Activated naive CD4-positive, alpha-beta T cell treated with anti-CD3 and anti-CD28 coated beads, Interleukin-2, amount 10 ng/mL, durations not matched to agents 7 days and 5 days (primary cell): ENCODE measurements at regions of chr4 and their contacts with region 1.

Region 1: DNA sequence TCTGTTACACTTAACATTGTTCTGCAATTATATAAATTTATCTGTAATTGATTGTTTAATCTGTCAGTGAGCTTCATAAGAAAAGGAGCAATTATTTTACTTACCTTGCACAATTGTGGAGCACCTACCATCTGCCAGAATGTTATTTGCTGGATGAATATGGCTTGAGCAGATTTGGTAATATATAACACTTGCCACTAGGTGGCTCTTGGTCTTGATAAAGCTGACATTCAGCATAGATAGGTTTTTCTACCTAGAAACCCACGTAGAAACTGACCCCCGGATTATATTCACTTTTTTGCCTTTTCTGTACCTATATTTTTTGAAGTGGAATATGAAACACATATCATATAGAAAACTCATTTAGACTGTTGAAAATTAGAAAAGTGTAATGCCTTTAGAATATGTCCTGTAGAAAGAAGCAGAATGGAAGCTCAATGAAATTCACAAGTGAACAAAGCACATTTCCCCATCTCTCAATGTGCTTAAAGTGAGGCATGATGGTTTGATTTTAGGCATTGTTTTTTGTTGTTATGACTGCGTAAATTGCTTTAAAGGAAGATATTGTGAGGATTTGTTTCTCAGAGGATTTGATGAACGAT is 9.5 kb downstream of the RBPJ start:
- DNase-seq: no peak
- H3K4me3 Mint-ChIP-seq: no peak overlapping the region
- H3K27ac Mint-ChIP-seq: no peak overlapping the region
- H3K4me1 Mint-ChIP-seq: peaks cover 19% of the 10 kb centered on the region
- H3K27me3 Mint-ChIP-seq: no peaks in the 10 kb centered on the region

Region 2: DNA sequence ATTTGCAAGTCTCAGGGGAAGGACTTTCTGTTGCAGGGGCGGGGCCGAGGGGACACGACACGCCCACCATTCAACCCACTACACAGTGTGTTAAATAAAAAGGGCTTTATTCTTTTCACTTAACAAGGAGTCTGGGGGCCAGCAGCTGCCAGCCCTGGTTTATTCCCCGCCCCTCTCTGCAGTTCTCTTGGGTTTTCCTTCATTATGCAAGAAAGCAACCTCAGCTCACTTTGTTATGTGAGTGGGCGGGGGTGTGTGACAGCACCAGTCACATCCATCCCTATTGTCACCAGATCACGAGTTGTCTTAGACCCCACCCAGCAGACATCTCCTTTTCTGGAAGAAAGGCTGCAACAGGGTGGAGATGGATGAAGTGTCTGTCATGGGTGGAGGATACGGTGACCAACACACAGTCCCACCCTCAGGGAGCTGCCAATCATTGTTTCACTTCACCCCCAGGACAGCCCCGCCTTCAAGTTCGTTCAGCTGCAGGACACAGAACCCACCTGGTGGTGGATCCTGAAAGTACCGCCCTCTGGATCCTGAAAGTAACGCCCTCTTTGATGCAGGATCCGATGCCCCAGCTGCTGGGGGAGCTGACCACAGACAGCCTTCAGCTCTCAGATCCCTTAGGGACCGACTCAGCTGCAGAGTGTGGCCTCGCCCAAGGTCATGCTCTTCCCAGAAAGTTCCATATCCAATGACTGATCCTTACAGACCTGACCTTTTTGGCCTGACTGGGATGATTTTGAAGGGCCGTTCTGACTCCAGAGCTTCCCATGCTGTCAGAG is 336.7 kb before region 1 on chr4:
- CTCF ChIA-PET with region 1: interaction called, 18 read pairs
- DNase-seq: peak; percentile 25
- H3K4me3 Mint-ChIP-seq: no peak overlapping the region
- H3K27ac Mint-ChIP-seq: no peak overlapping the region
- H3K4me1 Mint-ChIP-seq: peaks cover 2% of the 10 kb centered on the region
- H3K27me3 Mint-ChIP-seq: peaks cover 17% of the 10 kb centered on the region

Region 3: GRCh38 chr4:26061248-26061986 is 268.9 kb before region 1 on chr4:
- CTCF ChIA-PET with region 1: interaction called, 97 read pairs
- DNase-seq: peak; percentile 53
- H3K4me3 Mint-ChIP-seq: no peak overlapping the region
- H3K27ac Mint-ChIP-seq: no peak overlapping the region
- H3K4me1 Mint-ChIP-seq: peaks cover 4% of the 10 kb centered on the region
- H3K27me3 Mint-ChIP-seq: peaks cover 22% of the 10 kb centered on the region

Region 4: GRCh38 chr4:26342328-26343037 is 12.2 kb after region 1 on chr4:
- CTCF ChIA-PET with region 1: interaction called, 14 read pairs
- DNase-seq: no peak
- H3K4me3 Mint-ChIP-seq: no peak overlapping the region
- H3K27ac Mint-ChIP-seq: no peak overlapping the region
- H3K4me1 Mint-ChIP-seq: peaks cover 17% of the 10 kb centered on the region
- H3K27me3 Mint-ChIP-seq: no peaks in the 10 kb centered on the region

Region 5: GRCh38 chr4:26400132-26400531 is 69.8 kb after region 1 on chr4:
- CTCF ChIA-PET with region 1: interaction called, 12 read pairs
- DNase-seq: no peak
- H3K4me3 Mint-ChIP-seq: no peak overlapping the region
- H3K27ac Mint-ChIP-seq: no peak overlapping the region
- H3K4me1 Mint-ChIP-seq: peaks cover 42% of the 10 kb centered on the region
- H3K27me3 Mint-ChIP-seq: no peaks in the 10 kb centered on the region

Region 6: GRCh38 chr4:26418107-26418506 is 87.8 kb after region 1 on chr4:
- CTCF ChIA-PET with region 1: interaction called, 174 read pairs
- DNase-seq: no peak
- H3K4me3 Mint-ChIP-seq: no peak overlapping the region
- H3K27ac Mint-ChIP-seq: no peak overlapping the region
- H3K4me1 Mint-ChIP-seq: no peaks in the 10 kb centered on the region
- H3K27me3 Mint-ChIP-seq: no peaks in the 10 kb centered on the region